Activated naive CD4-positive, alpha-beta T cell treated with anti-CD3 and anti-CD28 coated beads for 36 hours (primary cell): ENCODE measurements at regions of chr11 and their contacts with region 1.

Region 1: GRCh38 chr11:77082838-77083562 is 16.2 kb downstream of the CAPN5 start:
- DNase-seq: peak; percentile 78
- H3K4me3 Mint-ChIP-seq: peak overlapping the region; percentile 74
- H3K27ac Mint-ChIP-seq: peak overlapping the region; percentile 89
- H3K4me1 Mint-ChIP-seq: peaks cover 17% of the 10 kb centered on the region
- H3K27me3 Mint-ChIP-seq: no peaks in the 10 kb centered on the region

Region 2: DNA sequence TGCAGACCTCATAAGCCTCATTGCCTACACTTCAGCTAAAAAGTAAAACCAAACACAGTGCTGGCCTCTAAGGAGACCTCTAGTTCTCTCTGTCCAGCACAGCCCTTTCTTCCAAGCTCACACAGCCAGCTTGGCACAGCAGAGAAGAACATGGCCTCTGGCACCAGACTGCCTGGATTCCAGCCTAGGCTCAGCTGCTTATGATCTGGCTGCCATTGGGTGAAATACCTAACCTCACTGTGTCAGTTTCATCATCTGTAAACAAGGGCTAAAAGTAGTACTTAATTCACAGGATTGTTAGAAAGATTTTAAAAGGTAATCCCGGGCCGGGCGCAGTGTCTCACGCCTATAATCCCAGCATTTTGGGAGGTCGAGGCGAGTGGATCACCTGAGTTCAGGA is 232.2 kb before region 1 on chr11:
- CTCF ChIA-PET with region 1: no interaction called
- intact Hi-C with region 1: no loop called
- DNase-seq: no peak
- H3K4me3 Mint-ChIP-seq: no peak overlapping the region
- H3K27ac Mint-ChIP-seq: no peak overlapping the region
- H3K4me1 Mint-ChIP-seq: no peaks in the 10 kb centered on the region
- H3K27me3 Mint-ChIP-seq: peaks cover 2% of the 10 kb centered on the region

Region 3: GRCh38 chr11:77066229-77067042 is 16.6 kb before region 1 on chr11 and contains the start of gene CAPN5:
- CTCF ChIA-PET with region 1: no interaction called
- intact Hi-C with region 1: loop called (anchors 2 kb)
- DNase-seq: peak; percentile 82
- H3K4me3 Mint-ChIP-seq: peak within 1 kb of the TSS; percentile 77
- H3K27ac Mint-ChIP-seq: no peak within 1 kb of the TSS
- H3K4me1 Mint-ChIP-seq: peaks cover 10% of the 10 kb centered on the region
- H3K27me3 Mint-ChIP-seq: no peaks in the 10 kb centered on the region
- total RNA-seq, gene CAPN5: 0.79 to 1.5 TPM